B cell (primary cell): ENCODE measurements at regions of chr7 and their contacts with region 1.

Region 1: DNA sequence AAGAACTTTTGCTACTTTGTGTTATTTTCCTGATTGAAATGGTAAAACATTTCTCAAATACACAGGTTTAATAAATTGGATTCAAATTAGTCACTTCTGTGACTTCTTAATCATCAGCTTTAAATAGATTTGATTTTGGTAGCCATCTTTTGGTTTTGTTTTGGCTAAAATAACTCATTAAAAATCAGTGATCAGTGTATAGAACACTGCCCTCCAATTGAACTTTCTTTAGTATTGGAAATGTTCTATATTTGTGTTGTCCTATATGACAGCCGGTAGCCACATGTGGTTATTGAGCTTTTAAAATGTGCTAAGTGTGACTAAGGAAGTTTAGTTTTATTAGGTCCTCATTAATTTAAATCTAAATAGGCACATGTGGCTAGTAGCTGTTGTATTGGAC is 50.4 kb downstream of the GLCCI1 start:
- DNase-seq: no peak
- ATAC-seq: no peak
- H3K4me3 ChIP-seq: no peak overlapping the region
- H3K4me3 Mint-ChIP-seq: no peak overlapping the region
- H3K27ac ChIP-seq: peak overlapping the region in 1 of 2 donors; percentile 4
- H3K27ac Mint-ChIP-seq: no peak overlapping the region
- H3K4me1 ChIP-seq: peaks cover 2 to 3% of the 10 kb centered on the region in 2 donors
- H3K4me1 Mint-ChIP-seq: peaks cover 15% of the 10 kb centered on the region
- H3K27me3 ChIP-seq: no peaks in the 10 kb centered on the region
- H3K27me3 Mint-ChIP-seq: no peaks in the 10 kb centered on the region
- CTCF ChIP-seq: no peak

Region 2: GRCh38 chr7:8035647-8036518 is 16.9 kb after region 1 on chr7:
- CTCF ChIA-PET with region 1: no interaction called
- POLR2A ChIA-PET with region 1: no interaction called
- intact Hi-C with region 1: loop called (anchors 2 kb)
- DNase-seq: peak; percentile 54
- ATAC-seq: peak; percentile 78
- H3K4me3 ChIP-seq: no peak overlapping the region
- H3K4me3 Mint-ChIP-seq: no peak overlapping the region
- H3K27ac ChIP-seq: peak overlapping the region in 1 of 2 donors; percentile 20
- H3K27ac Mint-ChIP-seq: peak overlapping the region; percentile 77
- H3K4me1 ChIP-seq: peaks cover 3 to 5% of the 10 kb centered on the region in 2 donors
- H3K4me1 Mint-ChIP-seq: peaks cover 14% of the 10 kb centered on the region
- H3K27me3 ChIP-seq: no peaks in the 10 kb centered on the region
- H3K27me3 Mint-ChIP-seq: no peaks in the 10 kb centered on the region
- CTCF ChIP-seq: peak; percentile 75

Region 3: GRCh38 chr7:8893775-8894174 is 874.8 kb after region 1 on chr7:
- CTCF ChIA-PET with region 1: no interaction called
- POLR2A ChIA-PET with region 1: no interaction called
- intact Hi-C with region 1: no loop called
- DNase-seq: no peak
- ATAC-seq: no peak
- H3K4me3 ChIP-seq: no peak overlapping the region
- H3K4me3 Mint-ChIP-seq: no peak overlapping the region
- H3K27ac ChIP-seq: no peak overlapping the region
- H3K27ac Mint-ChIP-seq: no peak overlapping the region
- H3K4me1 ChIP-seq: no peaks in the 10 kb centered on the region
- H3K4me1 Mint-ChIP-seq: no peaks in the 10 kb centered on the region
- H3K27me3 ChIP-seq: no peaks in the 10 kb centered on the region
- H3K27me3 Mint-ChIP-seq: no peaks in the 10 kb centered on the region
- CTCF ChIP-seq: no peak